Activated CD4-positive, alpha-beta memory T cell treated with anti-CD3 and anti-CD28 coated beads for 36 hours (primary cell): ENCODE measurements at regions of chr6 and their contacts with region 1.

Region 1: DNA sequence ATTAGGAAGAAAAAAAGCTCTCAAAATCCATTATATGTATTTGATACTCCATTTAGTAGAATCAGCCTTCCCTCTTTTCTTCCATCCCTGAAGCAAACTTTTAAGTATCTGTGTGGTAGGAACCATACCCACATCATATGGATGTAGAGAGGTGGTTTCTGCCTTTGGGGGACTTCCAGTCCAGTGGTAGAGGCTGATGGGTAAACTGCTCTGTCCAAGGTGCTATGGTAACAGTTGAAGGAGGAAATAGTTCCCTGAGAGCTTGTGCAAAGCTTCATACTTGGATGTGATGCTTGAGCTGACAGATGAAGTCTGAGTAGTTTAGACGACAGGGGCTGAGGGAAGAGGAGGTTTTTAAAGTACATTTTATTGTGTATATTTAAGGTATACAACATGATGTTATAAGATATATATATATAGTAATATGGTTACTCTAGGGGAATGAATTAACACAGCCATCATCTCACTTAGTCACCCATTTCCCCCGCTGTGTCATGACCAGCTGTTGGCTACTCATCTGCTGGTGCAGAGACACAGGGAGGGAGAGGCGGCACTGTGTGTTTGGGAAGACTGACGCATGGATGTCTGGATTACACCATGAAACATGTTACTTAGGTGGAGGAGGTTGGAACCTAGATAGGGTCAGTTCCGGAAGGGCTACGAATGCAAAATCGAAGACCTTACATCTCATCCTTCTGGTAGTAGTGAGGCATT is 185.2 kb downstream of the FARS2 start:
- DNase-seq: no peak
- H3K4me3 Mint-ChIP-seq: no peak overlapping the region
- H3K27ac Mint-ChIP-seq: no peak overlapping the region
- H3K4me1 Mint-ChIP-seq: peaks cover 5% of the 10 kb centered on the region
- H3K27me3 Mint-ChIP-seq: no peaks in the 10 kb centered on the region

Region 2: DNA sequence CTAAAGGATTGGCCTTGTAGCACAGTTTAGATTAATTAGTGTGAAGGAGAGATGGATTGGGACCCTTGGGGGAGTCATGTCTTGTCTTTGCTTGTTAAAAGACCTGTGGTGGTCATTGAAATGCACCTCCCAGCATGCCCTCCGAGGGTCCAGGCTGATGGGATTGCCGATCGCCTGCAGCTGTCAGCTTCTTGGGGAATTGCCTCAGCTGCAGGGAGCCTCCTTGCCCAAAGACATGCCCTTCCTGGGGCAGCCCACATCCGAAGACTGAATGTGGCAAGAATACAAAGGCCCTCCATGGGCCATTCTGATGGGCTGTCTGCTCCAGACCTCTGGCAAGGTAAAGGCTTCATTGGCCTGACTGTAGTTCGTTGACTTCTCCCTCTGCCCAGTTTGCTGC is 34.5 kb before region 1 on chr6:
- CTCF ChIA-PET with region 1: no interaction called
- POLR2A ChIA-PET with region 1: no interaction called
- intact Hi-C with region 1: loop called (anchors 1 kb)
- DNase-seq: no peak
- H3K4me3 Mint-ChIP-seq: no peak overlapping the region
- H3K27ac Mint-ChIP-seq: no peak overlapping the region
- H3K4me1 Mint-ChIP-seq: no peaks in the 10 kb centered on the region
- H3K27me3 Mint-ChIP-seq: no peaks in the 10 kb centered on the region